HCT116 (cell line): ENCODE measurements at regions of chr6 and their contacts with region 1.

Region 1: GRCh38 chr6:12873691-12874090 is 157.1 kb downstream of the PHACTR1 start:
- DNase-seq: no peak
- ATAC-seq: no peak
- H3K4me3 ChIP-seq: no peak overlapping the region
- H3K27ac ChIP-seq: no peak overlapping the region
- H3K4me1 ChIP-seq: no peaks in the 10 kb centered on the region
- H3K27me3 ChIP-seq: peaks cover 54% of the 10 kb centered on the region
- CTCF ChIP-seq: no peak
- POLR2A ChIP-seq: no peak
- RAD21 ChIP-seq: no peak

Region 2: DNA sequence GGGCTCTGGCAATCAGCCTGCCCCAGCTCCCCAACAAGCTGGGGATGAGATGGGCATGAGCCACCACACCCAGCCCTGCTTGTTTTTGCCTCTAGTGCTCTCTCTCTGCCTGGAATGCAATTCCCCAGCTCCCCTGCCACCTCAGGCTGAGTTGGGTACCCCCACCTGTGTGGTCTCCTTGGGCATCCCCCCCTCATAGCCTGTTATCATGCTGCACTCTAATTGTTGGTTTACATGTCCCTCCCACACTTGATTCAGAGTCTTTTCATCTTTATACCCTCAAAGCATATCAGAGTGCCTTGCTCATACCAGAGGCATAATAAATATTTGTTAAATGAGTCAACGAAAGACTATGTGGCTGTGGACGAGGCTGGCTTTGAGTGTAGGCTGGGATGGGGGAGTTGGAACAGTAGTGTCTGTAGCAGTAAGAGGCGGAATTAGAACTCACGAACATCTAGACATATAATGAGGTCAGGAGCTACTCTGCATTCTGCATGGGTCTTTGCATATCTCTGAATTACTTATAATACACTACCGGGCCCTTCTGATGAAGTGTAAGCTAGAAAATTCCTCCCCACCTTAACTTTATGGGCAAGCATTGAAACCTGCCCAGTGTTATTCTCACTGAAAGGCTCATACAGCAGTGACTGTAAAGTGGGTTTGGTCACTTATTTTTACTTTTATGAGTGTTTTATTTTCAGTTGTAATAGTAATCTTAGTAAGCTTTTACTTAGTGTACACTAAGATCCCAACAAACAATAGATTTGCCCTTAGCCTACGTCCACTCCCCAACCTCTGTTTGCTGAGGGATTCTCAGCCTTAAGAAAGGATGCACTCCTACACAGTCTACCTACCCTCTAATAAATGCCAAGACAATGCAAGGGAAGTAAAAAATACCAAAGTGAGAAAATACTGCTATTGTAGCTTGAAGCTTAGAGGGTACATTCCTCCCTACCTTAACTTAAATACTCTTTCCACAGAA is 524.9 kb before region 1 on chr6:
- CTCF ChIA-PET with region 1: no interaction called
- POLR2A ChIA-PET with region 1: no interaction called
- RAD21 ChIA-PET with region 1: no interaction called
- intact Hi-C with region 1: no loop called
- DNase-seq: peak; percentile 83
- ATAC-seq: peak; percentile 94
- H3K4me3 ChIP-seq: peak overlapping the region in 1 of 2 experiments; percentile 42; a peak in 2 of 4 replicates
- H3K27ac ChIP-seq: no peak overlapping the region
- H3K4me1 ChIP-seq: peaks cover 8 to 35% of the 10 kb centered on the region in 2 experiments; a peak in 3 of 4 replicates
- H3K27me3 ChIP-seq: no peaks in the 10 kb centered on the region
- CTCF ChIP-seq: no peak
- POLR2A ChIP-seq: no peak
- RAD21 ChIP-seq: peak; percentile 20; the same call in 1 of the 2 replicates

Region 3: DNA sequence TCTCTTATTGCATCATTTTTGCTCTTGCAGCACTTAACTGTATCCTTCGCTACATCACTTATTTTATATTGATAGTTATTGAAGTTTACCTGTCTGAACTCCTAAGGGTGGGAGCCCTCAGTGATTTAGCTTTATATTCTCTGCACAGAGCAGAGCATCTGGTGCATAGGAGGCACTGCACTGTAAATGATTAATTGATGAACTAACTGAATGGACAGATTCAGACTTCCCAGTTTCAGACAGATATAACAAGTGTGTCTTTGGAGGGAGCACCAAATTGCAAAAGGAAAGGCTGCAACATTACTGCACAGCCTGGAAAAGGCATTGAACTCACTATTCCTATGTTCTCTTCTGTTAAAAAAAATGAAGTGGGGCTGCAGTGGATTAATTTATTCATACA is 423.2 kb before region 1 on chr6:
- CTCF ChIA-PET with region 1: no interaction called
- POLR2A ChIA-PET with region 1: no interaction called
- RAD21 ChIA-PET with region 1: no interaction called
- intact Hi-C with region 1: loop called (anchors 5 kb)
- DNase-seq: no peak
- ATAC-seq: no peak
- H3K4me3 ChIP-seq: no peak overlapping the region
- H3K27ac ChIP-seq: no peak overlapping the region
- H3K4me1 ChIP-seq: no peaks in the 10 kb centered on the region
- H3K27me3 ChIP-seq: no peaks in the 10 kb centered on the region; the same call in 1 of the 2 replicates
- CTCF ChIP-seq: no peak
- POLR2A ChIP-seq: no peak
- RAD21 ChIP-seq: no peak

Region 4: GRCh38 chr6:12836009-12836408 is 37.7 kb before region 1 on chr6:
- CTCF ChIA-PET with region 1: no interaction called
- POLR2A ChIA-PET with region 1: no interaction called
- RAD21 ChIA-PET with region 1: no interaction called
- intact Hi-C with region 1: no loop called
- DNase-seq: no peak
- ATAC-seq: no peak
- H3K4me3 ChIP-seq: no peak overlapping the region
- H3K27ac ChIP-seq: no peak overlapping the region
- H3K4me1 ChIP-seq: no peaks in the 10 kb centered on the region
- H3K27me3 ChIP-seq: 0 out of 2 replicates have a peak, but pooled peaks cover 8% of the 10 kb centered on the region
- CTCF ChIP-seq: no peak
- POLR2A ChIP-seq: no peak
- RAD21 ChIP-seq: no peak